ENCODE measurements at regions of chr14 and their contacts with region 1.

Region 1: DNA sequence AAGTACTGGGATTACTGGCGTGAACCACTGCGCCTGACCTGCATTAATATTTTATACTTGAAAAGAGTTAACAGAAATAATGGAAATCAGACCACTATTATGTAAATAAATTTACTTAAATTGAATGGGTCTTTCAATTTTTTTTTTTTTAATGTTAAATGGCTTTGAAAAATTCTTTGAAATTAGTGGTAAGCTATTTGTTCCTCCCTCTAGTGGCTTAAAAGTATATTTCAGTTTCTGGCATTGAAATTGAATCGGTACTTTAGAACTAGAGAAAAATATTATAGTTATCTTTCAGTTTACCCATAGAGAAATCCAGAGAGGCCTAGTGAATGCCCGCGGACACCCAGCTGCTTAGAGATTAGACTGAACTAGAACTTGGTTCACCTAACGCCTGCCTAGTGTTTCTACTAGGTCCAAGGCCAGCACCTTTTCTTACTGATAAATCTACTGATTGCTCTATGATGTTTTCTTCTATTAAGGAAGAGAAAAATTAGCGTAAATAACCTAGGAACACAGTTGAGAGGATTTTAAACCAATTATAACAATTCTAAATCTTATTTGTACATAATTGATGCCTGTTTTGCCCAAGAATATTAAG is 106.5 kb downstream of the EML1 start:
- DNase-seq: no peak
- H3K4me3 ChIP-seq: no peak overlapping the region
- H3K27ac ChIP-seq: no peak overlapping the region
- H3K4me1 ChIP-seq: no peaks in the 10 kb centered on the region
- H3K27me3 ChIP-seq: no peaks in the 10 kb centered on the region
- CTCF ChIP-seq: peak in 1 of 3 experiments; percentile 25; a peak in 2 of 4 replicates
- EP300 ChIP-seq: no peak
- POLR2A ChIP-seq: no peak
- RAD21 ChIP-seq: no peak

Region 2: GRCh38 chr14:99879401-99880295 is 20.0 kb before region 1 on chr14:
- CTCF ChIA-PET with region 1: interaction called, 81 read pairs
- POLR2A ChIA-PET with region 1: no interaction called
- DNase-seq: no peak
- H3K4me3 ChIP-seq: no peak overlapping the region
- H3K27ac ChIP-seq: no peak overlapping the region
- H3K4me1 ChIP-seq: peaks cover 7 to 25% (median 14%) of the 10 kb centered on the region in 4 experiments; a peak in 6 of 7 replicates
- H3K27me3 ChIP-seq: no peaks in the 10 kb centered on the region
- CTCF ChIP-seq: no peak
- EP300 ChIP-seq: no peak
- POLR2A ChIP-seq: no peak
- RAD21 ChIP-seq: no peak

Region 3: GRCh38 chr14:99910337-99911309 is 10.9 kb after region 1 on chr14:
- CTCF ChIA-PET with region 1: interaction called, 25 read pairs
- POLR2A ChIA-PET with region 1: no interaction called
- DNase-seq: no peak
- H3K4me3 ChIP-seq: no peak overlapping the region
- H3K27ac ChIP-seq: no peak overlapping the region
- H3K4me1 ChIP-seq: no peaks in the 10 kb centered on the region
- H3K27me3 ChIP-seq: no peaks in the 10 kb centered on the region
- CTCF ChIP-seq: no peak
- EP300 ChIP-seq: no peak
- POLR2A ChIP-seq: no peak
- RAD21 ChIP-seq: no peak

Region 4: DNA sequence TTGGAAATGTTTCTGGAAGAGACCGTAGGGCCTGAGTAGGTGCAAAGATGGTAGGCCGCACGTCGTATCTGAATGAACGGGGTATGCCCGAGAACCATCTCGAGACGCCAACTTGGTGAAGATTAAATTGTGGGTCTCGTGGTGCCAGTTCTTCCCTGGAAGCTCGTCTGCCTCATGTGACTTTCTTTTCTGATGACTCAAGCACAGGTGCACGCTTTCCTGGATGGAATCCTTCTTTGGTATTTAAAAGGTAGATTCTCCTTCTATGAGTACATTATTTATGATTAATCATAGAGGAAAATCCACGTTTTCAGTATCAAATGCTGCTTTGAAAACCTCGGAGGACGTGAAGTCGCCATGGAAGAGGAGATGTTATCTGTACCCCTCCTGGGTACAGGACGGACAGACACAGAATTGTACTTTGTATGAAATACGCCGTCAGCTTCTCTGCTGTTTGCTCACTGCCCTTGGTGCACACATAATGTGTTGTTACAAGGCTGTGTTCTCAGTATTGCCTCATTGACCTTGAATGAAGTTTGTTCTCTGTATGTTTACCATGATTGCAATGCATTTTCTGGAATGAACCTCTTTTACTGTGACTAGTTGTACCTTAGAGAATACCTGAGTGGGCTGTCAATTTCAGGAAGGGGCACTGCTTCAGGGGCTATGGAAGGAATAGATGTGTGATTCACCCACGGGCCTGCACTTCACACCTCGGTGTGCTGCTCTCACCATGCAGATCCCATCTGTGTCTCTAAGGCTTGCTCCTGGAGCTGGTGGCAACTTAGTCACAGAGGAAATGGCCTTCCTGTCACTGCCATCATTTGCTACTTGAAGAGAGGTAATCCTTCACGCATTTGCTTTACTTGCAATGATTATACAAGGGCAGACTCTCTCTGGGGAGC is 1141.1 kb after region 1 on chr14:
- CTCF ChIA-PET with region 1: no interaction called
- POLR2A ChIA-PET with region 1: no interaction called
- DNase-seq: no peak
- H3K4me3 ChIP-seq: no peak overlapping the region
- H3K27ac ChIP-seq: no peak overlapping the region
- H3K4me1 ChIP-seq: no peaks in the 10 kb centered on the region; a peak in 1 of 7 replicates
- H3K27me3 ChIP-seq: no peaks in the 10 kb centered on the region
- CTCF ChIP-seq: no peak
- EP300 ChIP-seq: no peak
- POLR2A ChIP-seq: no peak
- RAD21 ChIP-seq: no peak